ENCODE measurements at regions of chr17 and their contacts with region 1.

Region 1: GRCh38 chr17:1005361-1005946 is 8.5 kb downstream of the TIMM22 start:
- DNase-seq: peak in 2 of 3 donors; percentile 51 to 54
- ATAC-seq: peak; percentile 57
- H3K4me3 ChIP-seq: no peak overlapping the region
- H3K4me1 ChIP-seq: peaks cover 11% of the 10 kb centered on the region
- CTCF ChIP-seq: no peak

Region 2: DNA sequence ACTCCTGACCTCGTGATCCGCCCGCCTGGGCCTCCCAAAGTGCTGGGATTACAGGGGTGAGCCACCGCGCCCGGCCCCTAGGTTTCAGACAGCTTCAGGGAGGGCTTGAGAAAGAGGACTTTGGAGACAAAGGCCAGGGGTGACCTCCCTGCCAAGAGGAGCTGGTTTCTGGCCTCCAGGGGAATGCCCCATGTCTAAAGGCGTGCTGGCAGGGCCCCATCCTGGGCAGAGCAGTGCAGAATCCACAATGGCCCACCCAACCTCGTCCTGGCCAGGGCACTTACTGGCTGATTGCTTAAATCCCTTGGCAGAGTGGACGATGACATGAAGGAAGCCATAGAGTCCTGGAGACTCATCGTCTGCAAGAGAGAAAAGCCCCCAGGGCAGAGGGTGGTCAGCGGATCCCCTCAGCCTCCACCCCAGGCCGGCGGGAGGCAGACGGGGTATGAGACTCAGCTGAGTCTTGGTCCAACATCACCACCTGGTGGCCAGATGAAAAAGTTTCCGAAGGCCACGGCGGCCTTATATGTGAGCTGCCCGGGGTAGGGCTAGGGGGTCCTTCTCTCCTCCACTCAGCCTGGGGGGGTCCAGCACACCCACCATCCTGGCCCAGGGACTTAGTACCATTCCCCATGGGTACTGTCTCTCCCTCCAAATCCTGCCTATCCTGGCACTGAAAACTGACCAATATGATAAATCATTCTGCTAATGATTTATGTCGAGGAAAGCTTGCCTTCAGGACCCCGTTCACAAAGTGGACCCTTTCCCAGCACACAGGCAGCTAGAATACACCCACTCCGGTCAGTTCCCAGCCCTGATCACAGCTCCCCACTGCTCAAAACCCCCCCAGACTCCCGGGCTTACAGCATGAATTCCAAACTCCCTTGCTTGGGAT is 50.5 kb after region 1 on chr17:
- intact Hi-C with region 1: loop called in 1 of 2 experiments (anchors 10 kb)
- DNase-seq: peak; percentile 44 to 55 (median 52)
- ATAC-seq: peak; percentile 46
- H3K4me3 ChIP-seq: no peak overlapping the region
- H3K4me1 ChIP-seq: no peaks in the 10 kb centered on the region
- CTCF ChIP-seq: peak; percentile 23

Region 3: GRCh38 chr17:1179818-1180742 is 174.6 kb after region 1 on chr17 and contains the start of gene ABR:
- intact Hi-C with region 1: no loop called
- DNase-seq: peak; percentile 51 to 72 (median 71)
- ATAC-seq: peak; percentile 82
- H3K4me3 ChIP-seq: peak within 1 kb of the TSS; percentile 54
- H3K4me1 ChIP-seq: peaks cover 14% of the 10 kb centered on the region
- CTCF ChIP-seq: no peak
- total RNA-seq, gene ABR: 257 to 470 (median 292) TPM